ENCODE measurements at regions of chr5 and their contacts with region 1.

Region 1: GRCh38 chr5:36264202-36264760 is 22.6 kb upstream of the NADK2 start:
- DNase-seq: no peak
- H3K4me3 Mint-ChIP-seq: no peak overlapping the region
- H3K27ac Mint-ChIP-seq: no peak overlapping the region
- H3K4me1 Mint-ChIP-seq: no peaks in the 10 kb centered on the region
- H3K27me3 Mint-ChIP-seq: peaks cover 23% of the 10 kb centered on the region

Region 2: DNA sequence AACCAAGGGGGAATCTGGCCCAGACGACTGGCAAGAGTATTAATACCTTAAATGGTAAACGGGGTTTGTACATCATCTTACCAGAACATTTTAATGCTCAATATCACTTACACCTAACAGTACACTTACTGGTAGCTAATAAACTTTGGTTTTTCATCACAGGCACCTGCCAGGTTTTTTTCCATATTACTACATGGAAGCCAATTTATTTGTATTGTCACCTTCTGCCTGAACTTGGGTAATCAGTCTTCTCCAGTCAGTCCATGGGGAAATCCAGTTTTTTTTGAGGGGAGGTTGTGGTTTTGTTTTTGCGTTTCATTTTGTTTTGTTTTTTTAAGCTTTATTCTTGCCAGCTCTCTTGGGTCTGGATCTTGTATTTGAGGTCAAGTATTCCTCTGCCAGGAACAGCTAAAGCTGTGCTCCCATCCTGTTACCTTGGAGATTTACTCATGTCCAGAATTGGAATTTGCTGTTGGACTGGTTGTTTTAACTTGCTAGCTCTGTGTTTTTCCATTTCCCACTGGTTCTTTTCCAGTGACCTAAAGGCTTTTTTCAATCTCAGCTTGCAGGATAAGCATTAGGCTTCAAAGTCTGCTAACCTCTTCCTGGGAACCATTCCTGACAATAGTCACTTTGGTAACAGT is 11.4 kb before region 1 on chr5:
- CTCF ChIA-PET with region 1: interaction called, 11 read pairs
- intact Hi-C with region 1: no loop called
- DNase-seq: no peak
- H3K4me3 Mint-ChIP-seq: no peak overlapping the region
- H3K27ac Mint-ChIP-seq: no peak overlapping the region
- H3K4me1 Mint-ChIP-seq: no peaks in the 10 kb centered on the region
- H3K27me3 Mint-ChIP-seq: no peaks in the 10 kb centered on the region

Region 3: GRCh38 chr5:36305571-36306326 is 41.5 kb after region 1 on chr5:
- CTCF ChIA-PET with region 1: interaction called, 19 read pairs
- intact Hi-C with region 1: loop called (anchors 1 kb)
- DNase-seq: peak; percentile 51
- H3K4me3 Mint-ChIP-seq: no peak overlapping the region
- H3K27ac Mint-ChIP-seq: no peak overlapping the region
- H3K4me1 Mint-ChIP-seq: peaks cover 13% of the 10 kb centered on the region
- H3K27me3 Mint-ChIP-seq: peaks cover 2% of the 10 kb centered on the region

Region 4: GRCh38 chr5:36507332-36507952 is 243.2 kb after region 1 on chr5:
- CTCF ChIA-PET with region 1: interaction called, 9 read pairs
- intact Hi-C with region 1: loop called (anchors 1 kb)
- DNase-seq: peak; percentile 87
- H3K4me3 Mint-ChIP-seq: no peak overlapping the region
- H3K27ac Mint-ChIP-seq: no peak overlapping the region
- H3K4me1 Mint-ChIP-seq: no peaks in the 10 kb centered on the region
- H3K27me3 Mint-ChIP-seq: peaks cover 5% of the 10 kb centered on the region

Region 5: GRCh38 chr5:36695677-36696673 is 431.7 kb after region 1 on chr5:
- CTCF ChIA-PET with region 1: interaction called, 10 read pairs
- intact Hi-C with region 1: loop called (anchors 1 kb)
- DNase-seq: peak; percentile 72
- H3K4me3 Mint-ChIP-seq: no peak overlapping the region
- H3K27ac Mint-ChIP-seq: no peak overlapping the region
- H3K4me1 Mint-ChIP-seq: peaks cover 3% of the 10 kb centered on the region
- H3K27me3 Mint-ChIP-seq: peaks cover 21% of the 10 kb centered on the region